GM10248 (cell line): ENCODE measurements at regions of chr5 and their contacts with region 1.

Region 1: GRCh38 chr5:107571621-107572536 is 98.9 kb downstream of the EFNA5 start:
- DNase-seq: peak; percentile 69
- CTCF ChIP-seq: peak; percentile 97

Region 2: GRCh38 chr5:107476783-107477182 is 95.1 kb before region 1 on chr5:
- CTCF ChIA-PET with region 1: interaction called, 11 read pairs
- POLR2A ChIA-PET with region 1: no interaction called
- DNase-seq: peak; percentile 37
- CTCF ChIP-seq: no peak

Region 3: DNA sequence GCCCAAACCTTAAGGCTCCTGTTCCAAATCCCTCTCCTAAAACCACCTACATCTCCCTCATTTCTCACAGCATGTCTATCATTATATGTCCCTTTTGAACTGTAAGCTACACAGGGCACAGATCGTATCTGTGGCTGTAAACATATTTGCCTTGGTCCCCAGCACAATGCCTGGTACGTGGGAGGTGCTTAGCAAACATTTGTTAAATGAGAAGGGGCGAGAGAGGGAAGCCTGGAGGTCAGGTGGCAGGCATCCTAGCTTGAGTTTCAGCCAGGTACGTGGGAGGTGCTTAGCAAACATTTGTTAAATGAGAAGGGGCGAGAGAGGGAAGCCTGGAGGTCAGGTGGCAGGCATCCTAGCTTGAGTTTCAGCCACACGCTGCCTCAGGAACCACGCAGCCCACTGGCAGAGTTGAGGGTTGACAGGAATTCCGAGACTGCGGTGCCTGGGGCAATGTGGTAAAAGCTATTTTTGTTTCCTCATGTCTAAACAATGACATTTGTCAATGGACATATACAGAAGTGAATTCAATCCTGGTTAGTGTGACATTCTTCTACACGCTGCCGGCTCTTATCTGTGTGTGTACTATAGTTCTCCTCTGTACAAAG is 14.7 kb before region 1 on chr5:
- CTCF ChIA-PET with region 1: interaction called, 55 read pairs
- POLR2A ChIA-PET with region 1: no interaction called
- DNase-seq: no peak
- CTCF ChIP-seq: no peak

Region 4: GRCh38 chr5:107601076-107601475 is 29.2 kb after region 1 on chr5:
- CTCF ChIA-PET with region 1: interaction called, 29 read pairs
- POLR2A ChIA-PET with region 1: no interaction called
- DNase-seq: no peak
- CTCF ChIP-seq: no peak

Region 5: DNA sequence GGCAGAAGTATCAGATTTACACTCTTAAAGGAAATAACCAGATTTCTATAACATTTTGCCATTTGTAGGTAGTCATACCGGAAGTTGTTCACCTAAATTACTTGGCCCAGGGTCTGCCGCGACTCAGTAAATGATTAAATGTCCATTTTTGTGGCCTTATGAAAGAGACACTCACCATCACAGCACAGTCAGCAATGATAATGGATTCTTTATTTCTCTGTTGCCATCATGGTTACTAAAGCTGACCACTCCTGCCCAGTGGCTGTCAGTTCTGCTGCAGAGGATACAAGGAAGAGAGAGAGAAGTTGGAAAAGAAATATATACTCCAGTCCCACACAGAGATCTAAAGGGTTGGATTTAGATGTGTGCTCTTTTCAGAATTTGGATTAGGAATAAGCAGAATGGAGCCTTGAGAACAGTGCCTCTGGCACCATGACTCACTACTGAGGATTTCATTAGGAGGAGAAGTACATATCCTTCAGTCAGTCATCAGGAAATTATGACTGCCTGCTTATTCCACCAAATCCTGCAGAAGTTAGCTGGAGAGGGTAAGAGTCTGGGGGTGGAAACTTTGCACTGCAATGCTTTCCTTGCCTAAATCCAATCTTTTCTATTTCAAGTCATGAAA is 171.6 kb after region 1 on chr5:
- CTCF ChIA-PET with region 1: no interaction called
- POLR2A ChIA-PET with region 1: no interaction called
- DNase-seq: no peak
- CTCF ChIP-seq: no peak

Region 6: DNA sequence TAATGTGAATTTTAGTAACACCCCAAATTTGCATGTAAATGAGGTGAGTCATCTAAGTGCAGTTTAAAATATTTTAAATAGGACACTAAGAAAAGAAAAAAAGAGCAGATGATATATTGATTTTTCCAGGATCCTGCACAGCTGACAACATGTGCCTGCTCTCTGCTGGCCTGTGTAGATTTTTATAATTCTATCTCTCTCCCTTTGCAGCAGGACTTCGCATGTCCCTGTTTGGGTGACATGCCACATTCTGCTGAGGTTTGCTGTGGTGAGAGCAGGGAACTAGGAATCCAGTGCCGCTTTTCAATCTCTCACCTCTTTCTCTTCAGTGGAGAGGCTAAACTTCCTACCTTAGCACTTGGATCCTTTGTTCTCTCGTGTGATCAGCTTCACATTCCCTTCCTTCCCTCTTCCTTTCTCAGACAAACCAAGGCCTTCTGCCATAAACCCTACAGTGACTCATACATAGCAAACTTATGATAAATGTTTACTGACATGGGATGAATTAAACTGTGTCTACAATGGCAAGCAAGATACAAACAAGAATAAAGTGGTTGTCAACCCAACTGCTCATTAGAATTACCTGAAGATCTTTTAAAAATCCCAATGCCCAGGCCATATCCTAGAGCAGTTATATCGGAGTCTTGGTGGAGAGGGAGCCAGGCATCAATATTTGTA is 297.7 kb after region 1 on chr5:
- CTCF ChIA-PET with region 1: no interaction called
- POLR2A ChIA-PET with region 1: no interaction called
- DNase-seq: no peak
- CTCF ChIP-seq: no peak